Activated CD4-positive, alpha-beta T cell treated with anti-CD3 and anti-CD28 coated beads for 36 hours (primary cell): ENCODE measurements at regions of chr17 and their contacts with region 1.

Region 1: GRCh38 chr17:13888056-13888609 is 181.2 kb upstream of the COX10 start:
- DNase-seq: no peak
- ATAC-seq: no peak
- H3K4me3 Mint-ChIP-seq: no peak overlapping the region
- H3K27ac Mint-ChIP-seq: no peak overlapping the region
- H3K4me1 Mint-ChIP-seq: no peaks in the 10 kb centered on the region
- H3K27me3 Mint-ChIP-seq: no peaks in the 10 kb centered on the region

Region 2: GRCh38 chr17:13822700-13823099 is 65.4 kb before region 1 on chr17:
- CTCF ChIA-PET with region 1: no interaction called
- POLR2A ChIA-PET with region 1: no interaction called
- intact Hi-C with region 1: loop called in 1 of 2 experiments (anchors 10 kb)
- DNase-seq: no peak
- ATAC-seq: no peak
- H3K4me3 Mint-ChIP-seq: no peak overlapping the region
- H3K27ac Mint-ChIP-seq: no peak overlapping the region
- H3K4me1 Mint-ChIP-seq: peaks cover 9% of the 10 kb centered on the region
- H3K27me3 Mint-ChIP-seq: no peaks in the 10 kb centered on the region

Region 3: GRCh38 chr17:13869331-13869940 is 18.7 kb before region 1 on chr17:
- CTCF ChIA-PET with region 1: no interaction called
- POLR2A ChIA-PET with region 1: interaction called, 3 read pairs
- intact Hi-C with region 1: loop called in 1 of 2 experiments (anchors 1 kb)
- DNase-seq: no peak
- ATAC-seq: no peak
- H3K4me3 Mint-ChIP-seq: no peak overlapping the region
- H3K27ac Mint-ChIP-seq: no peak overlapping the region
- H3K4me1 Mint-ChIP-seq: no peaks in the 10 kb centered on the region
- H3K27me3 Mint-ChIP-seq: no peaks in the 10 kb centered on the region